ENCODE measurements at regions of chr19 and their contacts with region 1.

Region 1: GRCh38 chr19:16371540-16371986 is 46.9 kb downstream of the KLF2 start:
- DNase-seq: peak; percentile 94
- H3K4me3 Mint-ChIP-seq: no peak overlapping the region
- H3K27ac Mint-ChIP-seq: no peak overlapping the region
- H3K4me1 Mint-ChIP-seq: peaks cover 45% of the 10 kb centered on the region
- H3K27me3 Mint-ChIP-seq: no peaks in the 10 kb centered on the region

Region 2: GRCh38 chr19:16338470-16339360 is 32.8 kb before region 1 on chr19:
- CTCF ChIA-PET with region 1: interaction called, 12 read pairs
- POLR2A ChIA-PET with region 1: interaction called, 20 read pairs
- DNase-seq: peak; percentile 73
- H3K4me3 Mint-ChIP-seq: peak overlapping the region; percentile 67
- H3K27ac Mint-ChIP-seq: peak overlapping the region; percentile 92
- H3K4me1 Mint-ChIP-seq: peaks cover 72% of the 10 kb centered on the region
- H3K27me3 Mint-ChIP-seq: peaks cover 10% of the 10 kb centered on the region

Region 3: GRCh38 chr19:16608290-16608739 is 236.8 kb after region 1 on chr19:
- CTCF ChIA-PET with region 1: no interaction called
- POLR2A ChIA-PET with region 1: no interaction called
- DNase-seq: no peak
- H3K4me3 Mint-ChIP-seq: no peak overlapping the region
- H3K27ac Mint-ChIP-seq: no peak overlapping the region
- H3K4me1 Mint-ChIP-seq: peaks cover 49% of the 10 kb centered on the region
- H3K27me3 Mint-ChIP-seq: no peaks in the 10 kb centered on the region